ENCODE measurements at regions of chr11 and their contacts with region 1.

Region 1: DNA sequence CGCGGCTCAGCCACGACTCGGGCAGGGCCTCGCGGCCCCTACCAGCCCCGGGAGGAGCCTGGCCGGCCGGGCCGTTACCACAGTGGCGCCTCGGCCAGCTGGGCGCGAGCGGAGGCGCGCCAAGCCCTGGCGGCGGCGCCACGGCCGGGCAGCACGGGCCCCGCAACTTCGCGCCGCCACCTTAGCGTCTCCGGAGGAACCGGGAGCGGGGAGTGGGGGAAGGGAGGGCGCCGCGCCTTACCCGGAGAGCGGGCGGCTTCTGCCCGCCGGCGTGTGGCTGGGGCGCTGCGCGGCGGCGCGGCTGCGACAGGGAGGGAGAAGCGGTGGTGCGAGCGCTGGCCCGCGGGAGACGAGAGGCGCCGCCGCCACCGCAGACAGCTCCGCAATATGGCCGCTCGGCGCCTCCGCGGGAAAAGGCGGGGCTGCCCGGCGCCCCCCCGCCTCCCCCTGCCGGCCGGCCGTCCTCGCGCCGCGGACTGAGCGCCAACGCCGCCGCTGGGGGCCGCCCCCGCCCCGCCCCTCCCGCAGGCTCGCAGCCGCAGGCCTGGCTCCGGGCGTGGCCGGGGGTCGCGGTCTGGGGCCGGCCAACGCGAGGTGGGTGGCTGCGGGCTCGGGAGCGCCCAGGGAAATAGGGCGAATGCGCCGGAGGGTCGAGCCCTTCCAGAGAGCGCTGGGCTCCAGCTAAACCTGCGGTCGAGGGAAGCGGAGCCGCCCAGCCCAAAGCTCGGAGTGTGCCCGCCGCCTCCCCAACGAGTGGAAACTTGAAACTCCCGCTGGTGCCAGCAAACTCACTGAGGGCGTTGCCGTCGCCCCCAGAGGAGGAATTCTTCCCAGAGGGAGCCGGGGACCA is at the start of gene RDX:
- DNase-seq: peak; percentile 70 to 79
- ATAC-seq: peak; percentile 74 to 77
- H3K4me3 ChIP-seq: peak within 1 kb of the TSS; percentile 67
- H3K27ac ChIP-seq: peak within 1 kb of the TSS; percentile 96 to 100
- H3K4me1 ChIP-seq: peaks cover 37% of the 10 kb centered on the region
- CTCF ChIP-seq: no peak; the same call in 2 of the 3 replicates
- EP300 ChIP-seq: no peak
- POLR2A ChIP-seq: peak; percentile 59
- RAD21 ChIP-seq: peak in 1 of 2 experiments; percentile 32; a peak in 1 of 5 replicates
- polyA plus RNA-seq, gene RDX: 171 and 183 TPM in 2 replicates

Region 2: GRCh38 chr11:110356756-110357671 is 60.6 kb after region 1 on chr11:
- CTCF ChIA-PET with region 1: interaction called, 3 read pairs
- POLR2A ChIA-PET with region 1: interaction called, 28 read pairs
- DNase-seq: peak; percentile 67 to 92
- ATAC-seq: peak; percentile 84 to 93
- H3K4me3 ChIP-seq: no peak overlapping the region
- H3K27ac ChIP-seq: peak overlapping the region; percentile 82 to 96
- H3K4me1 ChIP-seq: peaks cover 53% of the 10 kb centered on the region
- CTCF ChIP-seq: no peak
- EP300 ChIP-seq: peak; percentile 82 to 85; a peak in 4 of 5 replicates
- POLR2A ChIP-seq: no peak
- RAD21 ChIP-seq: peak in 1 of 2 experiments; percentile 12; a peak in 1 of 5 replicates

Region 3: GRCh38 chr11:110409174-110409573 is 112.7 kb after region 1 on chr11:
- CTCF ChIA-PET with region 1: no interaction called
- POLR2A ChIA-PET with region 1: no interaction called
- DNase-seq: no peak
- ATAC-seq: no peak
- H3K4me3 ChIP-seq: no peak overlapping the region
- H3K27ac ChIP-seq: no peak overlapping the region
- H3K4me1 ChIP-seq: no peaks in the 10 kb centered on the region
- CTCF ChIP-seq: no peak
- EP300 ChIP-seq: no peak
- POLR2A ChIP-seq: no peak
- RAD21 ChIP-seq: no peak

Region 4: DNA sequence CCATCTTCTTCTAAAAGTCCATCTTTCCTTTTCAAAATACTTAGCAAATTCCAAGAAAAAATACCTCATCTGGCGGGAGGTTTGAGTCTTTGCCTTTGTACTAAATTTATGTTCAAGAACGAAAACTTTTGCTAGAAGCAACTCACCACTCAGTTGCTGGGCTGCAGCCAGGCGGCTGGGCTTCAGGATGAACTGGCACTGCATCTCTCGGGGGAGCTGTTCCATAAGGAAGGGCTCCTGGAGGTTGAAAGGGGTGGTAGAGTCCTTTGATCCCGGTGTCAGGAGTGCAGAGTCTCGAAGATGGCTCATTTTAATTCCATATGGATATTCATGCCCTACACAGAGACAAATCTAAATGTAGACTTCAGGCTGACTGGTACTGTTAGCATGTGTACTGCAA is 310.0 kb after region 1 on chr11:
- CTCF ChIA-PET with region 1: no interaction called
- POLR2A ChIA-PET with region 1: no interaction called
- DNase-seq: no peak
- ATAC-seq: no peak
- H3K4me3 ChIP-seq: no peak overlapping the region
- H3K27ac ChIP-seq: no peak overlapping the region
- H3K4me1 ChIP-seq: no peaks in the 10 kb centered on the region
- CTCF ChIP-seq: no peak
- EP300 ChIP-seq: no peak
- POLR2A ChIP-seq: no peak
- RAD21 ChIP-seq: no peak

Measured in A549 (cell line).